HEK293 (cell line): ENCODE measurements at regions of chr17 and their contacts with region 1.

Region 1: GRCh38 chr17:79045842-79046196 is 21.9 kb downstream of the C1QTNF1 start:
- H3K4me3 ChIP-seq: no peak overlapping the region
- H3K27ac ChIP-seq: no peak overlapping the region
- H3K4me1 ChIP-seq: no peaks in the 10 kb centered on the region
- CTCF ChIP-seq: peak; percentile 91

Region 2: GRCh38 chr17:78986048-78986648 is 59.7 kb before region 1 on chr17:
- CTCF ChIA-PET with region 1: interaction called, 11 read pairs
- POLR2A ChIA-PET with region 1: interaction called, 3 read pairs
- H3K4me3 ChIP-seq: no peak overlapping the region
- H3K27ac ChIP-seq: no peak overlapping the region
- H3K4me1 ChIP-seq: peaks cover 7% of the 10 kb centered on the region; the same call in 1 of the 2 replicates
- CTCF ChIP-seq: peak; percentile 34; the same call in 1 of the 2 replicates

Region 3: DNA sequence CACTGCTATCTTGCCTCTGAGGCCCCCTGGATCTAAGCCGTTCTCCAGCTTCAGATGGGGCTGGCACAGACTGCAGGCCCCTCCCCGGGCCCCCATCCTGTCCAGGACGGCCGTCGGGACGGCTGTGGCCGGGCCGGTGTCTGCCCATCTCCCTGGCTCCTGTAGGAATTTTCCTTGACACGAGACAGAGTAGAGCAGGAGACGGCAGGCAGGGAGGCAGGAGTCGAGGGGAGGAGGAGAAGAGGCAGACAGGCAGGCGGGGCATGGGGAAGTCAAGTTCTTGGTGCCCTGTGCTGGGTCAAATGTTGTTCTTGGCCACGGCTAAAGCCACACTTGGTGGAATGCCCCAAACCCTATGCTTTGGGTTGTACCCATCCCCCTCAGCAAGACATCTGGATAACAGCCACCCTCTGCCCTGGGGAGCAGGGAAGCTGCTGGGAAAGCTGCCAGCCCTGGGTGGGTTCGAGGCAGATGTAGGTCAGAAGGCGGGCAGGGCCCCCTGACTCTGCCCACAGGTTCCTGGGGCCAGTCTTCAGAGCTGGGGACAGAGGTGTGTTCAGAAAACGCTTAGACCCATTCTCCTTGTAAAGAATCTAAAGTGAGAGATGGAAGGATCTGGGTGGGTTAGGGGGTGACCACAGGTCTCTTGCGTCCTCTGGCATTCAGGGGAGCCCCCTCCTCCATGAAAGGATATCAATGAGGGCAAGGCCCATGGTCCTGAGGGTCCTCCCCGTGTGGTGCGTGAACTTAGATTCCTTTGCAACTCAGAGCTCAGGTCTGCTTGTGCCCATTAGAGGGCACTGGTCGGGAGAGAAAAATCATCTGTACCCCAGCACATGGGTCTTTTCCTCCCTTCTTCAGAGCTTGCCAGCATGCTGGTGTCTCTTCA is 17.6 kb before region 1 on chr17:
- CTCF ChIA-PET with region 1: interaction called, 122 read pairs
- POLR2A ChIA-PET with region 1: interaction called, 8 read pairs
- H3K4me3 ChIP-seq: no peak overlapping the region
- H3K27ac ChIP-seq: no peak overlapping the region
- H3K4me1 ChIP-seq: peaks cover 26% of the 10 kb centered on the region
- CTCF ChIP-seq: peak; percentile 48

Region 4: DNA sequence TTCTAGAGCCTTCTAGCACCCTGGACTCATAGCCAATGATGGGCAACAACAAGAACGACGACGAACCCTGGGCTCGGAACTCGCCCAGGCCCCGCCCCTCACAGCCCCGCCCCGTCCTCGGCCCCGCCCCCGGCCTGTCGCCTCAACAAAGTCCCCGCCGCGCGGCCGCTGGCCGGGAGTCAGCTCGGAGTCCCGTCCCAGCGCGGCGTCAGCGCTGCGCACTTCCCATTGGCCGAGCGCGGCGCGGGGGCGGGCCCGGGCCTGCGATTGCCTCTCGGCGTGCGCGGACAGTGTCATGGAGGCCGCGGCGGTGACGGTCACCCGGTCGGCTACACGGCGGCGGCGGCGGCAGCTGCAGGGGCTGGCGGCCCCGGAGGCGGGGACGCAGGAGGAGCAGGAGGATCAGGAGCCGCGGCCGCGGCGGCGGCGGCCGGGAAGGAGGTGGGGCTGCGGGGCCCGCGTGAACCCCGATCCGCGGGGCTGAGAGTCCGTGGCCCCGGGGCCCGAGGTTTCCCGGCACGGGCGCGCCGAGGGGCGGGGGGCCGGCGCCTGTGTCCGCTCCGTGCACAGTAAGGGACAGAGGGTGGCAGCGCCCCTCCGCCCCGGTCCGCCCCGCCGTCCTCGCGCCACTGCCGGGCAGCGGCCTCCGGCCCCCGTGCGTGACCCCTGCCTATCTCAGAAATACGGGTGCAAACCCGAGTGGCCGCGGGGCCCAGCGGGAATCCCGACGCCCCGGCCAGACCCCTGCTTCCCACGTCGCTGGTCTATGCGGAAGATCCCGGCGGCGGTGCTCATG is 29.0 kb after region 1 on chr17 and contains the start of gene ENGASE:
- CTCF ChIA-PET with region 1: interaction called, 62 read pairs
- POLR2A ChIA-PET with region 1: interaction called, 8 read pairs
- H3K4me3 ChIP-seq: peak within 1 kb of the TSS; percentile 68
- H3K27ac ChIP-seq: peak within 1 kb of the TSS; percentile 80; the same call in 1 of the 2 replicates
- H3K4me1 ChIP-seq: peaks cover 4% of the 10 kb centered on the region; the same call in 1 of the 2 replicates
- CTCF ChIP-seq: no peak

Region 5: DNA sequence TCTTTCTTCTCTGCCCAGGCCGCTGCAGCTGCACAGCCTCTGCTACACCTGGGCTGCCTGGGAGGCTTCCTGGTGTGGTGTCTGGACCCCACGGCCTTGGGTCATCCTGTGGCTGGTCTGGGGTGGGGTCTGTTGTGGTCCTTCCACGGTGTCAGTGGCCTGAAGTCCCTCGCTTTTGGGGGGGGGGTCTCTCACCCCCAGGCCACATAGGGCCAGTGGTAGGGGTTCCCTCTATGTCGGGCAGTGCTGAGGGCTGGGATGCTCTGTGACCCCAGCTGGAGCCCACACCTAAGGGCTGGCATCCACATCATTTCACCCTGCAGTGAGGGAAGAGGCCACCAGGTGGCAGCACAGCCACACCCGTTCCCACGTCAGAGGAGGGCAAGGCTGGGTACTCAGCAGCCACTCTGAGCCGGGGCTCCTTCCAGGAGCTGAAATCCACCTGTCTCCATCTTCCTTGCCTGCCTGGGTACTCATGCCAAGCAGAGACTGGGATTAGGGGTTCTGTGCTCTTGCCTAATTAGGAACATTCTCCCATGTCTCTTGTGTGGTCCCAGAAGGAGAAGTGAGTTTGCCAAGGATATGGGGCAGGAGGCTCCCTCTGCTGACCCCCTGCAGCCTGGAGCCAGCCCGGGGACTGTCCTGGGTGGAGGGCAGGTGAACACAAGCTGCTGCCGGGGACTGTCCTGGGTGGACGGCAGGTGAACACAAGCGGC is 41.8 kb after region 1 on chr17:
- CTCF ChIA-PET with region 1: interaction called, 62 read pairs
- POLR2A ChIA-PET with region 1: no interaction called
- H3K4me3 ChIP-seq: no peak overlapping the region
- H3K27ac ChIP-seq: no peak overlapping the region
- H3K4me1 ChIP-seq: no peaks in the 10 kb centered on the region
- CTCF ChIP-seq: peak; percentile 91

Region 6: GRCh38 chr17:79276821-79277220 is 231.0 kb after region 1 on chr17:
- CTCF ChIA-PET with region 1: no interaction called
- POLR2A ChIA-PET with region 1: no interaction called
- H3K4me3 ChIP-seq: no peak overlapping the region
- H3K27ac ChIP-seq: no peak overlapping the region
- H3K4me1 ChIP-seq: no peaks in the 10 kb centered on the region
- CTCF ChIP-seq: no peak